ENCODE measurements at regions of chr6 and their contacts with region 1.

Region 1: DNA sequence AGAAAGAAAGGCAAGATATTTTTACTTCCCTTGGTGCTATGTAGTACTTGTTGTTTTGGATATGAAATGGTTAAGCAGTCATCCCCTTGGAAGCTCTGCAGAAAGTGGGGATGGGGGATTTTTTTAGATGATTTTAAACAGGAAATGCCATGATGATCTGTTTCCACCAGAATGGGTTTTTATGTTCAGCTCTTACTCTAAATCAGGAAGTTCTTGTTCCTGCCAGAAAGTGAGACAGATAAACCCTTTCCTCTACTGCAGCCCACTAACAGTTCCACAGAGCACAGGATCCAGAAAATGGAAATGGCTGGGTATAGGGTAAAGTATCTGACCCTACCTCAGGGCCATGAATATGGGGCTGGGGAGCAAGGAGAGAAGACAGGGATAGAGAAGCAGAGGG is 32.1 kb upstream of the PPP1R3G start:
- DNase-seq: peak; percentile 71
- H3K4me3 ChIP-seq: no peak overlapping the region
- H3K27ac ChIP-seq: peak overlapping the region; percentile 45
- H3K4me1 ChIP-seq: peaks cover 27% of the 10 kb centered on the region
- H3K27me3 ChIP-seq: no peaks in the 10 kb centered on the region
- CTCF ChIP-seq: no peak
- POLR2A ChIP-seq: no peak

Region 2: DNA sequence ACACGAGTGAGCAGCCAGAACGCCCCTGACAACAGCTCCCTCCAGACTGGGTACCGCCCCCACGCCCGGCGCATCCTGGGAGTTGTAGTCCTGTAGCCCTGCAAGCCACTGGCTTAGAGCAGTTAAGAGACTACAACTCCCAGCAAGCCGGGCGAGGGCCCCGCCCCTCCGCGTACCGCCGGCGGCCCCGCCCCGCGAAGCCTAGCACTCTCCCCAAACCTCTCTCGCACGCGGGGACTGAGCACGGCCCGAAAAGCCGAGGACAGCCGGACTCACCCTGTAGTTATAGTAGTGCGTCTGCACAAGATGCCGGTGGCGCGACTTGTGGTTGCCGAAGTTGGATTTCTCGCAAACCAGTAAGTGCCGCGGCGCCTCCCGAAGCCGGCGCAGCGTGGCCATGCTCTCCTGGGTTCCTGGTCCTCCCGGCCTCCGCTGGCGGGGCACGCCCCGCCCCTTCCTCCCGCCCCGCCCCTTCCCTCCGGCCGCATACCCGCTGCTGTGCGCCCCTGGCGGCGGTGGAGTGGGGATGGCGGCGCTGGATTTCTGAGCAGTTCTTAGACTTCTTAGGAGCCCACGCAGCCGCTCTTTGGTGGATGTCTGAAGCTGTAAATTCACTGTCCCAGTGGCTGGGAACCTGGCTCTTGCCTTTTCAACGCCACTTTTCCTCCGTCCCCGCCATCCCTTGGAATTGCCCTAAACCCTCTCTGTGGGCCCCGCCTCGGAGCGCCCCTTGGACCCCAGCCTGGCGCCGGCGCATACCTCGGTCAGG is 49.2 kb before region 1 on chr6 and contains the start of gene RPP40:
- CTCF ChIA-PET with region 1: interaction called, 6 read pairs
- POLR2A ChIA-PET with region 1: no interaction called
- dilution Hi-C with region 1: no loop called
- intact Hi-C with region 1: loop called (anchors 1 kb)
- DNase-seq: peak; percentile 98
- H3K4me3 ChIP-seq: peak within 1 kb of the TSS; percentile 51 to 72 (median 63)
- H3K27ac ChIP-seq: peak within 1 kb of the TSS; percentile 79
- H3K4me1 ChIP-seq: peaks cover 7% of the 10 kb centered on the region
- H3K27me3 ChIP-seq: no peaks in the 10 kb centered on the region
- CTCF ChIP-seq: peak; percentile 74 to 85
- POLR2A ChIP-seq: peak; percentile 88
- total RNA-seq, gene RPP40: 12.6 and 15.3 TPM in 2 replicates

Region 3: DNA sequence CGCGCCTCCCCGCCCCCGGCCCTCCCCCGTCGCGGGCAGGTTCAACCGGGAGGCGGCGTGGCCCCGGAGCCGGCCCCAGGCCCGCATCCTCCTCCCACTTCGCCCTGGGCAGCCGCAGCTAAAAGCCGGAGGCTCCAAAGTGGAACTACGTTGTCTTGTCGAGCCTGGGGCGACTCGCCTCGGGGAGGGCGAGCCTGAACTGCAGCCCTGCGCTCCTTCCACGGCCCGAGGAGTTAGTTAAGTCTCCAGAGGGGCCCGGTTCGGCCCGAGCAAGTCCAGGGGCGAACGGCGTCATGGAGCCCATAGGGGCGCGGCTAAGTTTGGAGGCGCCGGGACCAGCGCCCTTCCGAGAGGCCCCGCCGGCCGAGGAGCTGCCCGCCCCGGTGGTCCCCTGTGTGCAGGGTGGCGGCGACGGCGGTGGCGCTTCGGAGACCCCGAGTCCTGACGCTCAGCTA is 32.2 kb after region 1 on chr6 and contains the start of gene PPP1R3G:
- CTCF ChIA-PET with region 1: interaction called, 7 read pairs
- POLR2A ChIA-PET with region 1: no interaction called
- dilution Hi-C with region 1: no loop called
- intact Hi-C with region 1: loop called (anchors 2 kb)
- DNase-seq: peak; percentile 68
- H3K4me3 ChIP-seq: peak within 1 kb of the TSS; percentile 55 to 69 (median 68)
- H3K27ac ChIP-seq: no peak within 1 kb of the TSS
- H3K4me1 ChIP-seq: peaks cover 13% of the 10 kb centered on the region
- H3K27me3 ChIP-seq: peaks cover 6 to 13% of the 10 kb centered on the region in 2 experiments
- CTCF ChIP-seq: no peak
- POLR2A ChIP-seq: no peak
- total RNA-seq, gene PPP1R3G: 0.07 and 0.09 TPM in 2 replicates

Region 4: GRCh38 chr6:5379647-5380242 is 326.7 kb after region 1 on chr6:
- CTCF ChIA-PET with region 1: interaction called, 14 read pairs
- POLR2A ChIA-PET with region 1: no interaction called
- dilution Hi-C with region 1: no loop called
- intact Hi-C with region 1: loop called (anchors 1 kb)
- DNase-seq: peak; percentile 71
- H3K4me3 ChIP-seq: no peak overlapping the region
- H3K27ac ChIP-seq: no peak overlapping the region
- H3K4me1 ChIP-seq: no peaks in the 10 kb centered on the region
- H3K27me3 ChIP-seq: no peaks in the 10 kb centered on the region
- CTCF ChIP-seq: peak; percentile 68 to 77
- POLR2A ChIP-seq: no peak

Region 5: DNA sequence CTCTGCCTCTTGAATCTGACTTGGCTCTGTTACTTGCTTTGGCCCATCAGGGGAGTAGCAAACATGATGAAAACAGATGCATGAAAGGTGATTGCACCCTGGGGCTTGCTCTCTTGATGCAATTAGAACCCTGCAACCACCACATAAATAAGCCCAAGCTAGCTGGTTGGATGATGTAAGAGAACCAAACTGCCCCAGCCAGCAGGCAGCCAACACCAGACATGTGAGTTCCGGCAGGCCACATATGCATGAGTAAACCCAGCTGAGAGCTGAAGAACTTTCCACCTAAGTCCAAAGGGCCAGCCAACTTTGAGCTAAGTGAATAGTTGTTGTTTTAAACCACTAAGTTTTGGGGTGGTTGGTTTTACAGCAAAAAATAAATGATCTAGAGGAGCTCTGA is 476.7 kb after region 1 on chr6:
- CTCF ChIA-PET with region 1: no interaction called
- POLR2A ChIA-PET with region 1: no interaction called
- dilution Hi-C with region 1: no loop called
- intact Hi-C with region 1: no loop called
- DNase-seq: no peak
- H3K4me3 ChIP-seq: no peak overlapping the region
- H3K27ac ChIP-seq: no peak overlapping the region
- H3K4me1 ChIP-seq: no peaks in the 10 kb centered on the region
- H3K27me3 ChIP-seq: no peaks in the 10 kb centered on the region
- CTCF ChIP-seq: no peak
- POLR2A ChIP-seq: no peak

Measured in endothelial cell of umbilical vein (primary cell).